Heart left ventricle (tissue), 16 donors: ENCODE measurements at regions of chr10 and their contacts with region 1.

Region 1: GRCh38 chr10:30215623-30216022 is 133.5 kb downstream of the MTPAP start:
- DNase-seq: peak in 4 of 5 donors; percentile 49 to 66 (median 62)
- ATAC-seq: peak in 3 of 4 donors; percentile 73 to 93 (median 77)
- H3K4me3 ChIP-seq: peak overlapping the region in 1 of 12 donors; percentile 10
- H3K27ac ChIP-seq: peak overlapping the region in 10 of 12 donors; percentile 25 to 71 (median 58)
- H3K4me1 ChIP-seq: peaks cover 0 to 27% (median 12%) of the 10 kb centered on the region in 12 donors
- H3K27me3 ChIP-seq: no peaks in the 10 kb centered on the region
- CTCF ChIP-seq: no peak
- POLR2A ChIP-seq: no peak

Region 2: GRCh38 chr10:29681676-29682448 is 533.8 kb before region 1 on chr10:
- intact Hi-C with region 1: no loop called
- DNase-seq: peak in 3 of 5 donors; percentile 36 to 60 (median 40)
- ATAC-seq: peak; percentile 33 to 89 (median 74)
- H3K4me3 ChIP-seq: no peak overlapping the region
- H3K27ac ChIP-seq: peak overlapping the region in 1 of 12 donors; percentile 47
- H3K4me1 ChIP-seq: peaks cover 0 to 27% (median 8%) of the 10 kb centered on the region in 12 donors
- H3K27me3 ChIP-seq: no peaks in the 10 kb centered on the region
- CTCF ChIP-seq: no peak
- POLR2A ChIP-seq: no peak

Region 3: GRCh38 chr10:29895456-29895855 is 320.2 kb before region 1 on chr10:
- intact Hi-C with region 1: no loop called
- DNase-seq: peak; percentile 79 to 87 (median 83)
- ATAC-seq: peak; percentile 70 to 95 (median 94)
- H3K4me3 ChIP-seq: no peak overlapping the region
- H3K27ac ChIP-seq: peak overlapping the region in 11 of 12 donors; percentile 11 to 80 (median 56)
- H3K4me1 ChIP-seq: peaks cover 0 to 19% (median 7%) of the 10 kb centered on the region in 12 donors
- H3K27me3 ChIP-seq: no peaks in the 10 kb centered on the region
- CTCF ChIP-seq: no peak
- POLR2A ChIP-seq: no peak

Region 4: DNA sequence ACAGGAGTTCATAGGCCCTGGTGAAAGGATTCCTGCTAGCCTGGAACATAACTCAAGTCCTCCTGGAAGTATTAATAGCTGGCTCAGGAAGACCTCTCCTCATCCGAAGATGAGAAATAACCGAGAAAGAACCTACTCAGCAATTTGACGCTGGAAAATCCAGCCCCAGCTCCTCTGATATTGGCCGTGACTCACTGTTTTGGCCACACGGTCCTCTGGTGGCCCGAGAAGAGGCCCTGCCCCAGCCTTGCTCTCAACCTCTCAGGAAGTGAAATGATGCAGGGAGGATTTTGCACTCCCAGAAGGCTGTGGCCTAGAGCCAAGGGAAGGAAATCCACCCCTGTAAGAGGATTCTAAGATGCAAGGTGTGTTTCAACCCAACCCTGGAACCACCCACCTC is 11.9 kb after region 1 on chr10:
- intact Hi-C with region 1: loop called in 1 of 10 experiments (anchors 1 kb)
- DNase-seq: peak in 3 of 5 donors; percentile 42 to 58 (median 50)
- ATAC-seq: peak in 3 of 4 donors; percentile 76 to 95 (median 83)
- H3K4me3 ChIP-seq: no peak overlapping the region
- H3K27ac ChIP-seq: peak overlapping the region in 10 of 12 donors; percentile 22 to 76 (median 64)
- H3K4me1 ChIP-seq: peaks cover 0 to 24% (median 0%) of the 10 kb centered on the region in 12 donors
- H3K27me3 ChIP-seq: no peaks in the 10 kb centered on the region
- CTCF ChIP-seq: no peak
- POLR2A ChIP-seq: no peak